ENCODE measurements at regions of chr1 and their contacts with region 1.

Region 1: GRCh38 chr1:100459358-100460114 is 78.4 kb upstream of the GPR88 start:
- DNase-seq: peak; percentile 62 to 87 (median 74)
- ATAC-seq: peak; percentile 95
- H3K4me3 ChIP-seq: no peak overlapping the region
- H3K27ac ChIP-seq: no peak overlapping the region
- H3K4me1 ChIP-seq: peaks cover 0 to 17% of the 10 kb centered on the region in 2 donors
- H3K27me3 ChIP-seq: no peaks in the 10 kb centered on the region
- CTCF ChIP-seq: peak; percentile 81 to 85

Region 2: GRCh38 chr1:99808391-99809115 is 651.0 kb before region 1 on chr1:
- intact Hi-C with region 1: loop called in 1 of 2 experiments (anchors 5 kb)
- DNase-seq: peak in 2 of 4 donors; percentile 79 to 87
- ATAC-seq: peak; percentile 97
- H3K4me3 ChIP-seq: no peak overlapping the region
- H3K27ac ChIP-seq: no peak overlapping the region
- H3K4me1 ChIP-seq: peaks cover 0 to 6% of the 10 kb centered on the region in 2 donors
- H3K27me3 ChIP-seq: peaks cover 0 to 1% of the 10 kb centered on the region in 2 donors
- CTCF ChIP-seq: peak; percentile 54 to 60

Region 3: GRCh38 chr1:100351095-100351891 is 108.2 kb before region 1 on chr1:
- intact Hi-C with region 1: loop called in 1 of 2 experiments (anchors 10 kb)
- DNase-seq: peak; percentile 91 to 95 (median 94)
- ATAC-seq: peak; percentile 79
- H3K4me3 ChIP-seq: peak overlapping the region; percentile 66 to 94
- H3K27ac ChIP-seq: peak overlapping the region; percentile 93
- H3K4me1 ChIP-seq: peaks cover 7 to 31% of the 10 kb centered on the region in 2 donors
- H3K27me3 ChIP-seq: no peaks in the 10 kb centered on the region
- CTCF ChIP-seq: peak in 1 of 2 donors; percentile 20

Region 4: GRCh38 chr1:100866041-100866900 is 406.7 kb after region 1 on chr1:
- intact Hi-C with region 1: loop called in 1 of 2 experiments (anchors 5 kb)
- DNase-seq: peak in 2 of 4 donors; percentile 40 to 55
- ATAC-seq: peak; percentile 77
- H3K4me3 ChIP-seq: no peak overlapping the region
- H3K27ac ChIP-seq: no peak overlapping the region
- H3K4me1 ChIP-seq: peaks cover 0 to 3% of the 10 kb centered on the region in 2 donors
- H3K27me3 ChIP-seq: no peaks in the 10 kb centered on the region
- CTCF ChIP-seq: peak; percentile 50 to 51

Measured in left lung (tissue), 14 donors.